ENCODE measurements at regions of chr15 and their contacts with region 1.

Region 1: DNA sequence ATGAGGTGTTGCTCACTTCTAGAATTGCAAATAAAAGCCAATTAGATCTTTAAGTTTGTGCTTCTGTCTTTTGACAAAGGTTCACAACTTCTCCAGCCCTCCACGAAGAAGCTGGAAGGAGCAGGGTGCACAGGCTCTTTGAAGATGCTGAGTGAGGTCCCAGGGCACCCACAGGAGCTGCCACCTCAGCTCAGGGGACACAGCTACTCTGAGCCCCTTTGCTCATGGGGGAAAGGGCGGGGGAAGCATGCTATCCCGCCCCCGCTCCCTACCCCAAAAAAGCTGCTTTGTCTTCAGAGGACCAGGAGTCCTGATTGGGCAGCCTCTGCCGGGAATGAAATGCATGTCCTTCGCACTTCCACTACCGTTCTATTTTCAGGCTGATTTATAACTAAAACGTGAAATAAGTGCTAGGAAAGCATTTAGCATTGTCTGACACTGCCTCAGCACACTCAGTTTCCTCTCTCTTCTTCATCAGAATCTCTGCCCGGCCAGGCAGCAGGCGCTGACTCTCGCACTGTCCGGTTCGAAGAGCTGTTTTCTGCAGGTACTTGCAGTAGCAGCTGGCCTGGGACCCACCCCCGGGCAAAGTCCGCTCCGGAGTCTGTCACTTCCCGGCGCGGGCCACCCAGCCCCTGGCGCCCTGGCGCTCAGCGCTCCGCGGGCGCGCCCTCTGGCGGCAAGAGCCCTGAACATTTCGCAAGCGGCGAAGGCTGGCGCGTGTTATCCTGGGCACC is 45.5 kb upstream of the KLHL25 start:
- DNase-seq: peak; percentile 61 to 84
- ATAC-seq: peak; percentile 91 to 95
- H3K4me3 ChIP-seq: peak overlapping the region; percentile 18 to 59 (median 36)
- H3K27ac ChIP-seq: no peak overlapping the region
- H3K4me1 ChIP-seq: peaks cover 0 to 4% of the 10 kb centered on the region in 2 donors
- H3K27me3 ChIP-seq: no peaks in the 10 kb centered on the region
- CTCF ChIP-seq: peak; percentile 84 to 94 (median 92)
- POLR2A ChIP-seq: no peak

Region 2: DNA sequence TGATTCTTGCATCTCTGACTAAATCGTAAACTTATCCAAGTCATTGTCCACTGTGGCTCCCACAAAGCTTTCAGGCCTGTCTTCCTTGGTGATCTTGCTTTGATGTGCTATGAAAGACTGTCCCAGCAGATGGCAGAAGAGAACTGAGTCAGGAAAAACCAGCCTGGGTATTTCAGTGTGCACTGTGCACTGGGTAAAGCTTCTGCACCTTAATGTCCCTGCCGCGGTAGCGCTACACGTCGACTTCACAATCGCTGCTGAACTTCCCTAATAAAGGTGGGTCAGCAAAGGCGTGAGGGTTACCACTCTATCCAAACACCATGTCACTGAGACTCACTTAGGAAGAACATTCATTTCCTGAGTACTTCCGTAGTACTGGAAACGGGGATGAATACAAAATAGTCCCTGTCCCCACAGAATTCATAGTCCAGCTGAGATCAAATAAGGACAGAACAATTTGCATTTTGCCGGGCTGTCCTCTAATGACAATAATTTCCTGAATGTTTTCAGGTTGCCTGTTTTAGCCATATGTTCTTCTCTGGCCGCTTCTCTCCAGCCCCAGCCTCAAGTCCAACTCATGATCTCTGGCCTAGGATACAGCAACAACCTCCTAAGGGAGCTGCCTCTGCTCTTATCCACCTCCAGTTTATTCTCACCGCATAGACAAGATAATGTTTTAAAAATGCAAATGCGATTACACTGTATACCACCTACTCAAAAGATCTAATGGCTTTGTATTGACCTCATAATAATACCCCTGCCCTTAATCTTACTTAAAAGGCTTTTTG is 543.4 kb before region 1 on chr15:
- in situ Hi-C with region 1: loop called in 3 of 4 experiments (anchors 10 kb)
- intact Hi-C with region 1: no loop called
- DNase-seq: peak; percentile 20 to 55
- ATAC-seq: peak; percentile 97 to 99
- H3K4me3 ChIP-seq: peak overlapping the region; percentile 22 to 50 (median 36)
- H3K27ac ChIP-seq: peak overlapping the region in 1 of 4 donors; percentile 24
- H3K4me1 ChIP-seq: no peaks in the 10 kb centered on the region
- H3K27me3 ChIP-seq: no peaks in the 10 kb centered on the region
- CTCF ChIP-seq: peak; percentile 52 to 80 (median 68)
- POLR2A ChIP-seq: no peak

Region 3: DNA sequence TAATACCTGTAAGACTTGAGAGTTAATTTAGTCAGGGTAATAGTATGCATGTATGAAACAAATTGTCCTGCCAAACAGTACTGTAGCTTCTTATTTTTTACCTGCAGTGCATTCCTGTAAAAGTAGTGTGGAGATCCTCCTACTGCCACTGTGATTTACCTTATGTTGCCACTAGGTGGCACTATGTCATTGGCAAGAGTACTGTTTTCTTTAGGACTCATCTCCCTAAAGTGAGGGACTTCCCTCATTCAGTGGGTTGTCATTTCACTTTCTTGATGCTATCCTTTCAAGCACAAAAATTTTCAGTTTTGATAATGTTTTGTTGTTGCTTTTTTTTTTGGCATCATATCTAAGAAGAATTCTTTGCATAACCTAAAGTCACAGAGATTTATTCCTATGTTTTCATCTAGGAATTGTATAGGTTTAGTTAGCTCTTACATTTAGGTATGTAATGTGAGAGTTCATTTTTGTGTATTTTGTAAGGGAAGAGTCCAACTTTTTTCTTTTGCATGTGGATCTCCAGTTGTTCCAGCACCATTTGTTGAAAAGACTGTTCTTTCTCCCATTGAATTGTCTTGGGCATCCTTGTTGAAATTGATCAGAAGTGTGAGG is 354.2 kb before region 1 on chr15:
- in situ Hi-C with region 1: loop called in 3 of 4 experiments (anchors 10 to 25 kb)
- intact Hi-C with region 1: loop called (anchors 5 kb)
- DNase-seq: peak; percentile 25 to 45
- ATAC-seq: peak; percentile 87 to 94
- H3K4me3 ChIP-seq: no peak overlapping the region
- H3K27ac ChIP-seq: no peak overlapping the region
- H3K4me1 ChIP-seq: peaks cover 0 to 19% of the 10 kb centered on the region in 2 donors
- H3K27me3 ChIP-seq: no peaks in the 10 kb centered on the region
- CTCF ChIP-seq: peak; percentile 55 to 91 (median 78)
- POLR2A ChIP-seq: no peak

Region 4: GRCh38 chr15:85618956-85619491 is 221.2 kb before region 1 on chr15:
- in situ Hi-C with region 1: loop called in 1 of 4 experiments (anchors 25 kb)
- intact Hi-C with region 1: loop called (anchors 5 kb)
- DNase-seq: peak; percentile 80 to 81
- ATAC-seq: peak; percentile 68 to 77
- H3K4me3 ChIP-seq: peak overlapping the region; percentile 41 to 67 (median 54)
- H3K27ac ChIP-seq: peak overlapping the region; percentile 81 to 86 (median 82)
- H3K4me1 ChIP-seq: peaks cover 88 to 99% of the 10 kb centered on the region in 2 donors
- H3K27me3 ChIP-seq: no peaks in the 10 kb centered on the region
- CTCF ChIP-seq: no peak
- POLR2A ChIP-seq: peak; percentile 54 to 78

Region 5: GRCh38 chr15:85730001-85730820 is 110.0 kb before region 1 on chr15:
- in situ Hi-C with region 1: loop called in 3 of 4 experiments (anchors 5 to 10 kb)
- intact Hi-C with region 1: loop called (anchors 2 kb)
- DNase-seq: no peak
- ATAC-seq: peak; percentile 45 to 65
- H3K4me3 ChIP-seq: no peak overlapping the region
- H3K27ac ChIP-seq: peak overlapping the region; percentile 53 to 82 (median 63)
- H3K4me1 ChIP-seq: peaks cover 4 to 9% of the 10 kb centered on the region in 2 donors
- H3K27me3 ChIP-seq: no peaks in the 10 kb centered on the region
- CTCF ChIP-seq: peak; percentile 73 to 82 (median 76)
- POLR2A ChIP-seq: no peak

Region 6: DNA sequence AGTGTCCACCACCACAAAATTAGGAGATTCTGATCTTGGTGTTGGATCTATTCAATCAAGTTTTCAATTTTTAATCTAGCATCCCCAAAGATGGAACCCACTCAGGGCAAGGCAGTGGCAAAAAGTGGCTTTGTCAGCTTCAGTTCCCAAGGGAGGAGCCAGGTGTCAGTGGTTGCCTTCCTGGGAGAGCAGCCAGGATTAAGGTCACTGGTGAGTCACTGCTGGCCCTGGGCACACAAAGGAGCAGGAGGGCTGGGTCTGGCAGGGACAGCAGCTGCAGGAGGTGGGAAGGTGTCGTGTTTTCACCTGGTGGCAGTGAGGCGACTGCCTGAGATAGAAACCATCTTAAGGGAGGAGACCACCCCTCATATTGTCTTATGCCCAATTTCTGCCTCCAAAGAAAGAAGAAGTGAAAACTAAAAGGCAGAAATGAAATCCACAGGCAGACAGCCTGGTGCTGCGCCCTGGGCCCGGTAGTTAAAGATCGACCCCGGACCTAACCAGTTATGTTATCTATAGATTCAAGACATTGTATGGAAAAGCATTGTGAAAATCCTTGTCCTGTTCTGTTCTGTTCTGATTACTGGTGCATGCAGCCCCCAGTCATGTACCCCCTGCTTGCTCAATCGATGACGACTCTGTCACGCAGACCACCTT is 39.6 kb before region 1 on chr15:
- in situ Hi-C with region 1: loop called in 1 of 4 experiments (anchors 5 kb)
- intact Hi-C with region 1: loop called (anchors 2 kb)
- DNase-seq: peak; percentile 89 to 95
- ATAC-seq: peak; percentile 99
- H3K4me3 ChIP-seq: no peak overlapping the region
- H3K27ac ChIP-seq: peak overlapping the region; percentile 46 to 61 (median 52)
- H3K4me1 ChIP-seq: peaks cover 19 to 21% of the 10 kb centered on the region in 2 donors
- H3K27me3 ChIP-seq: no peaks in the 10 kb centered on the region
- CTCF ChIP-seq: peak in 4 of 5 experiments; percentile 20 to 59 (median 54)
- POLR2A ChIP-seq: no peak

Region 7: DNA sequence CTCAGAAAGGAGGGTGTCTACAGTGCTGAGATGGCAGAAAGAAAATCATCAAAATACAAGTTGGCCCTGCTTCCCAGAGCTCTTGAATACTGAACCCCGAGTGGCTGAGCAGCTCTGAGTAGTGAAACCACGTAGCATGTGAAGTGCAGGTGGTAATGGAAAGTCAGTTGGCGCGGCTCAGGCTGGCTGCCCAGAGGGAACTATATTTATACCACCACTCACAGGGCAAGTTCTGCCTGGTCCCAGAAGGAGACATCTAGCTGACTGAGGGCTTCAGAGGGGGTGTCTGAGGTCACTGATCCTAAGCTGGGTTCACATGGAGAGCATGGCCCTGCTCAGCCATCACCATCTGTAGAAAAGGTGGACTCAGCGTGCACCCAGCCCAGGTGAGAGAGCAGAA is 109.9 kb after region 1 on chr15:
- in situ Hi-C with region 1: no loop called
- intact Hi-C with region 1: no loop called
- DNase-seq: peak; percentile 49 to 78
- ATAC-seq: peak; percentile 96 to 97
- H3K4me3 ChIP-seq: no peak overlapping the region
- H3K27ac ChIP-seq: peak overlapping the region; percentile 54 to 69 (median 63)
- H3K4me1 ChIP-seq: peaks cover 9 to 10% of the 10 kb centered on the region in 2 donors
- H3K27me3 ChIP-seq: no peaks in the 10 kb centered on the region
- CTCF ChIP-seq: no peak
- POLR2A ChIP-seq: no peak

Region 8: GRCh38 chr15:86089422-86089821 is 249.2 kb after region 1 on chr15:
- in situ Hi-C with region 1: no loop called
- intact Hi-C with region 1: no loop called
- DNase-seq: no peak
- ATAC-seq: no peak
- H3K4me3 ChIP-seq: no peak overlapping the region
- H3K27ac ChIP-seq: no peak overlapping the region
- H3K4me1 ChIP-seq: peaks cover 9 to 67% of the 10 kb centered on the region in 2 donors
- H3K27me3 ChIP-seq: no peaks in the 10 kb centered on the region
- CTCF ChIP-seq: no peak
- POLR2A ChIP-seq: no peak

Region 9: DNA sequence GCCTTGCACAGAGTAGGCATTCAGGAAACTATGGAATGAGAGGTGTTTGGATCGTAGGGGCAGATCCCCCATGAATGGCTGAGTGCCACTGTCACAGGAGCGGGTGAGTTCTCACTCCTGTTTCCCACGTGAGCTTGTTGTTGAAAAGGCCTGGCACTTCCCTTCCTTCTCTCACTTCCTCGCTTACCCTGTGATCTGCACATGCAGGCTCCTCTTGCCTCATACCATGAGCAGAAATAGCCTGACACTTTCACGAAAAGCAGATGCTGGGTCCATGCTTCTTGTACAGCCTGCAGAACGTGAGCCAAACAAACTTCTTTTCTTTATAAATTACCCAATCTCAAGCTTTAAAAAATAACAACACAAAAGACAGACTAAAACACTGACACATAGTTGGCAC is 294.8 kb after region 1 on chr15:
- in situ Hi-C with region 1: no loop called
- intact Hi-C with region 1: no loop called
- DNase-seq: peak; percentile 86 to 88
- ATAC-seq: peak; percentile 97 to 98
- H3K4me3 ChIP-seq: no peak overlapping the region
- H3K27ac ChIP-seq: peak overlapping the region; percentile 75 to 89 (median 81)
- H3K4me1 ChIP-seq: peaks cover 13 to 57% of the 10 kb centered on the region in 2 donors
- H3K27me3 ChIP-seq: no peaks in the 10 kb centered on the region
- CTCF ChIP-seq: peak in 1 of 5 experiments; percentile 19
- POLR2A ChIP-seq: peak; percentile 11 to 30

Measured in gastrocnemius medialis (tissue), 4 donors.